BJ (cell line): ENCODE measurements at regions of chr19 and their contacts with region 1.

Region 1: GRCh38 chr19:4139614-4140236 is 13.7 kb upstream of the CREB3L3 start:
- DNase-seq: no peak
- H3K4me3 ChIP-seq: no peak overlapping the region
- H3K27me3 ChIP-seq: no peaks in the 10 kb centered on the region
- CTCF ChIP-seq: peak; percentile 85

Region 2: DNA sequence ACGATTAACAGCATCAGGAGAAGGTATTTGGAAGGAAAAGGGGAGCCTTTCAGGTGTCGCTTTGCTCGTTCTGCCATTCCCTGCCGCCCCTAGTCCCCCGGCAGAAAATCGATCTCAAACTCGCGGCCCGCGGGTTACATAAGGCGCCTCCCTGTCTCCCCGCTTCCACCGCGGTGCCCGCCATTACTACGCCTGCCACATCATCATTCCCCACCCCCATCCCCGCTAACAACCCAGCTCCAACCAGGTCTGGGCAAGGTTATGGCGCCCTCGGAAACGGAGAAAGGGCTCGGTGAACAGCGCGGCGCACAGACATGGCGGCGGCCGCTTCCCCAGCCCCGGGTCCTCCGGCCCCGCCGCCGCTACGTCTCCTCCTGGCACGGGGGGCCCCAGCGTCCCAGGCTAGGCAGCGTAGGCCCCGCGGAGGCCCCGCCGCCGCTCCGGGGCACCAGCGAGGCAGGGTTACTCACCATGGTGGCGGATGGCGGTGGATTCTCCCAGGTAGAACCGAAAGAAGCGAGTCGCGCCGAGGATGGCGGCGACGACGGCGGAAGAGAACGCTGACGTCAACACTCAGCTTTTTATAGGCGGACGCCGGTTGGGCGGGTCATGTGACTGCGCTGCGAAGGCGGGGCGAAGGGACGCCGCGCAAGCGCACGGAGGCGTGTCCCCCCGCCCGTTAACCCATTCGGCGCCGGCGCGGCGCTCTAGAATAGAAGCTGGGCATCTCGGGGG is 154.7 kb before region 1 on chr19 and contains the start of gene EEF2:
- CTCF ChIA-PET with region 1: interaction called, 11 read pairs
- POLR2A ChIA-PET with region 1: no interaction called
- DNase-seq: no peak
- H3K4me3 ChIP-seq: peak within 1 kb of the TSS; percentile 68
- H3K27me3 ChIP-seq: no peaks in the 10 kb centered on the region
- CTCF ChIP-seq: no peak
- polyA plus RNA-seq, gene EEF2: 1,661 and 2,469 TPM in 2 replicates

Region 3: DNA sequence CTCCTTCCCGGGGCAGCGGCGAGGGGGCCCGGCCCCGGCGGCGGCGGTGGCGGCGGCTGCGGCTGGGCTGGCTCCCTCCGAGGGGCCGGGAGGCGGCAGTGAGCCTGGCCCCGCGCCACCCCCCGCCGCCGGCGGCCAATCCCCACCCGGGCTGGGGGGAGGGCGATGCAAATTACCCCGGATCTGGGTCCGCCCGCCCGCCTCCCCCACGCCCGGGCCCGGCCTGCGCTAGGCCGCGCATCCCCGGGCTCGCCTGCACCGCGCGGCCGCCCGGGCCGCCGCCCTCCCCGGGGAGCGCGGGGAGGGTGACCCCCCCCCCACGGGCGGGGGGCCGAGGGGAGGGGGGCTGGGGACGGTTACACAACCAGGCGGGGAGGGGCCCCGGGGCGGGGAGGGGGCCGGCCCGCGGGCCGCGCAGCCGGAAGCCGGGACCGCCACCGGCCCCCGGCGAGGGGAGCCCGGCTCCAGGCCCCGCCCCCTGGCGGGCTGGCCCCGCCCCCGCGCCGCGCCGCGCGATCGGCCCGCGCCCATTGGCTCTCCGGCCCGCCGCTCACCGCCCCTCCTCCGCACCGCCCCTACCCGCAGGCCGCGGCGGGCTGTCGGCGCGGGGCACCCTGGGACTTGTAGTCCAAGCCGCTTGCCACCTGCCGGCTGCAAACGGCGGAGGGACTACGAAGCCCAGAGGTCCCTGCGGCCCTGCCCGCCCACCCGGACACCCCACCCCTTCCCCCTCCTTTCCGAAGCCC is 74.1 kb before region 1 on chr19:
- CTCF ChIA-PET with region 1: no interaction called
- POLR2A ChIA-PET with region 1: no interaction called
- DNase-seq: peak; percentile 56
- H3K4me3 ChIP-seq: peak overlapping the region; percentile 97
- H3K27me3 ChIP-seq: no peaks in the 10 kb centered on the region
- CTCF ChIP-seq: no peak

Region 4: GRCh38 chr19:4120531-4120930 is 19.2 kb before region 1 on chr19:
- CTCF ChIA-PET with region 1: interaction called, 12 read pairs
- POLR2A ChIA-PET with region 1: no interaction called
- DNase-seq: no peak
- H3K4me3 ChIP-seq: no peak overlapping the region
- H3K27me3 ChIP-seq: no peaks in the 10 kb centered on the region
- CTCF ChIP-seq: no peak

Region 5: GRCh38 chr19:4172861-4173473 is 33.2 kb after region 1 on chr19:
- CTCF ChIA-PET with region 1: interaction called, 21 read pairs
- POLR2A ChIA-PET with region 1: no interaction called
- DNase-seq: no peak
- H3K4me3 ChIP-seq: no peak overlapping the region
- H3K27me3 ChIP-seq: peaks cover 3% of the 10 kb centered on the region
- CTCF ChIP-seq: no peak

Region 6: GRCh38 chr19:4390567-4391305 is 251.0 kb after region 1 on chr19:
- CTCF ChIA-PET with region 1: no interaction called
- POLR2A ChIA-PET with region 1: no interaction called
- DNase-seq: no peak
- H3K4me3 ChIP-seq: peak overlapping the region; percentile 3; the same call in 1 of the 2 replicates
- H3K27me3 ChIP-seq: no peaks in the 10 kb centered on the region
- CTCF ChIP-seq: no peak